Activated T-helper 1 cell treated with anti-CD3 and anti-CD28 coated beads, Interleukin-12 subunit alpha, Interleukin-12 subunit beta, Interleukin-2, Interleukin-4 antibody, amounts not matched to agents 30 ng/mL and 10 ng/mL and 1 ng/mL, durations not matched to agents 14 hours and 24 hours and 36 hours (primary cell): ENCODE measurements at regions of chr19 and their contacts with region 1.

Region 1: DNA sequence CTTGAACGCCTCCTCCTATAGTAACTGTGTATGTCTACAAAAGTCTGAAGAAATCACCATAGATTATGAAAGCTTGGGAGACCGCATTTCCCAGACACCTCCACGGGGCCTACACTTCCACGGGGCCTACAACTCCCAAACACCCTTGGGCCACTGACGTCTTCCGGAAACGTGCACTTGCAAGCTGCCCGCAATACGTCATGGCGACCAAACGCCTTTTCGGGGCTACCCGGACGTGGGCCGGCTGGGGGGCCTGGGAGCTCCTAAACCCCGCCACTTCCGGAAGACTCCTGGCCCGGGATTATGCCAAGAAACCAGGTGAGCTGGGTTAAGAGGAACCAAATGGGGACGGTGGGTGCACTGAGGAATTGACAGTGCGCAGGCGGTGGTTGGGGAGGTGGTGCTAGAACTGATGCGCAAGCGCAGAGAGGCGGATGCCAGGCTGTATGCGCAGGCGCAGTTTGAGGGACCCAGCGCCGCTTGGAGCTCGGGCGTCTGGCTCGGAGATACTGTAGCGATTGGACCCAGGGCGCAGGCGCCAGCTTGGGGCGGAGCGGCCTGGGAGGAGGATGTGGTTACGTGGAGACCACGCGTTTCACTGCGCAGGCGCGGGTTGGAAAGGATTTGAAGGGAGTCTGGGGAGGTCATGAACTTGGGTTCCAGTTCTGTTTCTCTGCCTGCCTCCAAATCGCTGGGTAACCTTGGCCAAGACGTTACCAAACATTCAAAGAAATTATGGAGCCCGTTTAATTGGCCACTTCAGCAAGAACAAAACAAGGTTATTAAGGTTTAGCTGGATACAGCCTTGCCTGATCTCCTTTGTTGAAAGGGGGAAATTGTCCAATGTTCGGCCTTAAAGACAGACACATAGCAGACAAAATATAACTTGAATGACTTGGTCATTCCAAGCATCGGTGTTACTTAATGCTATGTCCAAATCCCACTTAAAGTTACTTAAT is at the start of gene MRPL54:
- DNase-seq: peak; percentile 100
- H3K4me3 Mint-ChIP-seq: peak within 1 kb of the TSS; percentile 100
- H3K27ac Mint-ChIP-seq: peak within 1 kb of the TSS; percentile 99
- H3K4me1 Mint-ChIP-seq: peaks cover 27% of the 10 kb centered on the region
- H3K27me3 Mint-ChIP-seq: peaks cover 2% of the 10 kb centered on the region
- total RNA-seq, gene MRPL54: 88.2 and 94.7 TPM in 2 replicates

Region 2: GRCh38 chr19:2782936-2783780 is 979.6 kb before region 1 on chr19 and contains the start of gene SGTA:
- intact Hi-C with region 1: loop called (anchors 2 kb)
- DNase-seq: peak; percentile 96
- H3K4me3 Mint-ChIP-seq: peak within 1 kb of the TSS; percentile 98
- H3K27ac Mint-ChIP-seq: peak within 1 kb of the TSS; percentile 89
- H3K4me1 Mint-ChIP-seq: peaks cover 62% of the 10 kb centered on the region
- H3K27me3 Mint-ChIP-seq: no peaks in the 10 kb centered on the region
- total RNA-seq, gene SGTA: 73.4 and 77.8 TPM in 2 replicates

Region 3: GRCh38 chr19:3557461-3558248 is 205.1 kb before region 1 on chr19 and contains the start of gene MFSD12:
- intact Hi-C with region 1: loop called (anchors 5 kb)
- DNase-seq: peak; percentile 96
- H3K4me3 Mint-ChIP-seq: peak within 1 kb of the TSS; percentile 96
- H3K27ac Mint-ChIP-seq: peak within 1 kb of the TSS; percentile 84
- H3K4me1 Mint-ChIP-seq: peaks cover 32% of the 10 kb centered on the region
- H3K27me3 Mint-ChIP-seq: no peaks in the 10 kb centered on the region
- total RNA-seq, gene MFSD12: 126 and 136 TPM in 2 replicates

Region 4: GRCh38 chr19:3801412-3802096 is 38.8 kb after region 1 on chr19:
- intact Hi-C with region 1: loop called (anchors 1 kb)
- DNase-seq: peak; percentile 58
- H3K4me3 Mint-ChIP-seq: peak overlapping the region; percentile 26
- H3K27ac Mint-ChIP-seq: peak overlapping the region; percentile 52
- H3K4me1 Mint-ChIP-seq: peaks cover 27% of the 10 kb centered on the region
- H3K27me3 Mint-ChIP-seq: peaks cover 7% of the 10 kb centered on the region

Region 5: GRCh38 chr19:3970808-3971598 is 208.2 kb after region 1 on chr19 and contains the start of gene DAPK3:
- intact Hi-C with region 1: loop called (anchors 5 kb)
- DNase-seq: peak; percentile 93
- H3K4me3 Mint-ChIP-seq: peak within 1 kb of the TSS; percentile 91
- H3K27ac Mint-ChIP-seq: peak within 1 kb of the TSS; percentile 82
- H3K4me1 Mint-ChIP-seq: peaks cover 25% of the 10 kb centered on the region
- H3K27me3 Mint-ChIP-seq: no peaks in the 10 kb centered on the region
- total RNA-seq, gene DAPK3: 47.2 and 47.3 TPM in 2 replicates

Region 6: GRCh38 chr19:4182084-4182810 is 419.5 kb after region 1 on chr19 and contains the starts of genes ANKRD24 and SIRT6:
- intact Hi-C with region 1: loop called (anchors 1 kb)
- DNase-seq: peak; percentile 96
- H3K4me3 Mint-ChIP-seq: peak within 1 kb of the TSS; percentile 98
- H3K27ac Mint-ChIP-seq: peak within 1 kb of the TSS; percentile 94
- H3K4me1 Mint-ChIP-seq: peaks cover 45% of the 10 kb centered on the region
- H3K27me3 Mint-ChIP-seq: peaks cover 8% of the 10 kb centered on the region
- total RNA-seq, gene ANKRD24: 0.49 and 0.54 TPM in 2 replicates
- total RNA-seq, gene SIRT6: 42.6 and 46.4 TPM in 2 replicates

Region 7: GRCh38 chr19:4723367-4724187 is 960.8 kb after region 1 on chr19 and contains the start of gene DPP9:
- intact Hi-C with region 1: loop called (anchors 5 kb)
- DNase-seq: peak; percentile 97
- H3K4me3 Mint-ChIP-seq: peak within 1 kb of the TSS; percentile 98
- H3K27ac Mint-ChIP-seq: peak within 1 kb of the TSS; percentile 91
- H3K4me1 Mint-ChIP-seq: peaks cover 25% of the 10 kb centered on the region
- H3K27me3 Mint-ChIP-seq: peaks cover 5% of the 10 kb centered on the region
- total RNA-seq, gene DPP9: 93.6 and 95.8 TPM in 2 replicates